Cardiac septum (tissue), 1 donor: ENCODE measurements at regions of chr9 and their contacts with region 1.

Region 1: GRCh38 chr9:115132648-115133047 is 14.7 kb upstream of the TNC start:
- DNase-seq: no peak

Region 2: GRCh38 chr9:113844466-113844865 is 1288.2 kb before region 1 on chr9:
- intact Hi-C with region 1: no loop called
- DNase-seq: no peak

Region 3: DNA sequence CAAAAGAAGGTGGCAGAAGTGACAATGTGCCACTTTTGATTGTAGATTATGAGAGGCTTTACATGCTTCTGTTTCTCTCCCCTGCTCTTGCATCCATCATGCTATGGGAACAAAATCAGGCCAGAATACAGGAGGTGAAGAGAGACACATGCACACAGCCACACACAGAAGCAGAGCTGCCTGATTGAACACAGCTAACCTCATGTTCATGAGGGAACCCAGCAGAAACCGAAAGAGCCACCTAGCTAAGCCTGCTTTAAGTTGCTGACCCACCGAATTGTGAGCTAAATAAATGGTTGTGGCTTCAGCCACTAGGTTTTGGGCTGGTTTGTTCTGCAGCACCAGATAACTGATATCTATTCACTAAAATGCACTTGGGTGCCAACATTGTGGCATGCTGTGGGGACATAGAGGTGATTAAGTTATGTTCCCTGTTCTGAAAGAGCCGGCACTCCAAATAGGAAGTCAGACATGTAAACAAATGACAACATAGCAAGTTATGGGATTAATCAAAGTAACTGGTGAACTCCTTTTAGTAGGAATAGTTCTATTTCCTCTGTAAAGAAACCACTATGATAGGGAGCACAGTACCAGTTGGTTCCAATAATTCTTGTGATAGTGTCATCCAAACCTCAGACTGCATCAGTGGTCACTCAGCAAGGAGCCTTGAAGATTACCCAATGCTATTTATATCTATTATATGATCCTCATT is 78.9 kb after region 1 on chr9:
- intact Hi-C with region 1: loop called (anchors 5 kb)
- DNase-seq: no peak